ENCODE measurements at regions of chr4 and their contacts with region 1.

Region 1: GRCh38 chr4:120718979-120719566 is 203.5 kb downstream of the PRDM5 start:
- DNase-seq: peak; percentile 51
- ATAC-seq: peak; percentile 79
- H3K4me3 ChIP-seq: no peak overlapping the region
- H3K27ac ChIP-seq: no peak overlapping the region
- H3K4me1 ChIP-seq: no peaks in the 10 kb centered on the region
- H3K27me3 ChIP-seq: no peaks in the 10 kb centered on the region
- CTCF ChIP-seq: peak; percentile 73

Region 2: DNA sequence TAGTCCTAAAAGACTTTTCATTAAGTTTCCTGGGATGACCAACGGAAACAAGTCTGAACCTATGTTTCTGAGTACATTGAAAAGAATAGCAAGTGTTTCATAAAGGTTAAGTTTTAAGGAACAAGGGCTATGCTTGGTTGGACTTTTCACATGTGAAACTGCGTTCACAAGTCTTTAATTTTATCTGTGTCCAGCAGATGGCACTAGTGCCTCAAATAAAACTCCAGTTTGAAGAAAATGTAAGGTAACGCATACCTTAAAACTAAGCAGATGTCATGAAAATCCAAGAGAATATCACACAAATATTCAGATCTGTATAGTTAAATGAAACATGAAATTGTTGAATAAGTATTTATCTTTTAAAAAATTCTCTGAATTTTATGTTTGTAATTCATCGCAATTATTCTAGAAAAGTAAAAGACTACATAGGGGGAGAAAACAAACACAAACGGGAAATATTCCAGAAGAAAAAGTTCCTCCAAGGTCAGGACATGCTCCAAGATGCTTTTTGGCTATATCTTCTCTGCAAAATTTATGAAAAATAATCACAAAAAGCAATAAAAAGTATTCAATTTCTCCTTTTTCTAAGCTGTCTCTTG is 562.9 kb before region 1 on chr4:
- CTCF ChIA-PET with region 1: no interaction called
- POLR2A ChIA-PET with region 1: no interaction called
- intact Hi-C with region 1: loop called (anchors 5 kb)
- DNase-seq: peak; percentile 75
- ATAC-seq: no peak
- H3K4me3 ChIP-seq: no peak overlapping the region
- H3K27ac ChIP-seq: no peak overlapping the region
- H3K4me1 ChIP-seq: no peaks in the 10 kb centered on the region
- H3K27me3 ChIP-seq: peaks cover 4% of the 10 kb centered on the region; the same call in 1 of the 2 replicates
- CTCF ChIP-seq: peak; percentile 69

Region 3: DNA sequence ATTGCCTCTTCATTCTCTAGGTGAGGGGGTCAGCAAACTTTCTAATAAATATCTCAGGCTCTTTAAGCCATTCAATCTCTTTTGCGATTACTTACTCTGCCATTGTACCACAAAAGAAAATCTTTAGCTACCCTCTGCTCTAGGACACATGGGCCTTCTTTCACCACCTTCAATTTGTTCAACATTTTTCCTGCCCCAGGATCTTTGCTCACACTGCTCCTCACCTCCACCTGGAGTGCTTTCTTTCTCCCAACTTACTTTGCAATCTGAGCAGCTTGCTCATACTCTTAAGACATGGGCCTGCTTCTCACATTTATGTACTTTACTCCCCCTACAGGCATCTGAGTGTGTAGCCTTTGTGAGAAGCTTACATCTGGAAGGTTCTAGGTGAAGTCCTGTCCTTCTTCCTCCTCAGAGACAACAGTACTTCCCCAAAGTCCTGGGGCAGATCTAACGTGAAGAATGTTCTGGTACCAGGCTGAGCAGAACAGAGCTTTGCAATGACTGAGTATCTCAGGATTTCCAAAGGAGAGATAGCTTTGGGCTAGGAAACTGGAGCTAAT is 258.4 kb after region 1 on chr4:
- CTCF ChIA-PET with region 1: no interaction called
- POLR2A ChIA-PET with region 1: no interaction called
- intact Hi-C with region 1: loop called (anchors 2 kb)
- DNase-seq: peak; percentile 61
- ATAC-seq: peak; percentile 74
- H3K4me3 ChIP-seq: no peak overlapping the region
- H3K27ac ChIP-seq: no peak overlapping the region
- H3K4me1 ChIP-seq: no peaks in the 10 kb centered on the region
- H3K27me3 ChIP-seq: no peaks in the 10 kb centered on the region
- CTCF ChIP-seq: peak; percentile 62

Region 4: GRCh38 chr4:121096629-121097028 is 377.6 kb after region 1 on chr4:
- CTCF ChIA-PET with region 1: no interaction called
- POLR2A ChIA-PET with region 1: no interaction called
- intact Hi-C with region 1: loop called (anchors 1 kb)
- DNase-seq: peak; percentile 50
- ATAC-seq: no peak
- H3K4me3 ChIP-seq: no peak overlapping the region
- H3K27ac ChIP-seq: peak overlapping the region; percentile 20; the same call in 1 of the 2 replicates
- H3K4me1 ChIP-seq: no peaks in the 10 kb centered on the region
- H3K27me3 ChIP-seq: no peaks in the 10 kb centered on the region
- CTCF ChIP-seq: peak; percentile 61